PC-3 (cell line): ENCODE measurements at regions of chr2 and their contacts with region 1.

Region 1: GRCh38 chr2:69914170-69914960 is 544 bp upstream of the MXD1 start:
- DNase-seq: peak; percentile 99
- ATAC-seq: peak; percentile 82
- H3K4me3 ChIP-seq: peak overlapping the region; percentile 71
- H3K27ac ChIP-seq: peak overlapping the region; percentile 89
- H3K4me1 ChIP-seq: peaks cover 29% of the 10 kb centered on the region
- H3K27me3 ChIP-seq: no peaks in the 10 kb centered on the region
- CTCF ChIP-seq: peak; percentile 43

Region 2: GRCh38 chr2:69724540-69725159 is 189.7 kb before region 1 on chr2:
- CTCF ChIA-PET with region 1: interaction called, 7 read pairs
- POLR2A ChIA-PET with region 1: interaction called, 3 read pairs
- intact Hi-C with region 1: loop called (anchors 5 kb)
- DNase-seq: peak; percentile 94
- ATAC-seq: peak; percentile 84
- H3K4me3 ChIP-seq: peak overlapping the region; percentile 72
- H3K27ac ChIP-seq: no peak overlapping the region
- H3K4me1 ChIP-seq: no peaks in the 10 kb centered on the region
- H3K27me3 ChIP-seq: no peaks in the 10 kb centered on the region
- CTCF ChIP-seq: peak; percentile 93

Region 3: DNA sequence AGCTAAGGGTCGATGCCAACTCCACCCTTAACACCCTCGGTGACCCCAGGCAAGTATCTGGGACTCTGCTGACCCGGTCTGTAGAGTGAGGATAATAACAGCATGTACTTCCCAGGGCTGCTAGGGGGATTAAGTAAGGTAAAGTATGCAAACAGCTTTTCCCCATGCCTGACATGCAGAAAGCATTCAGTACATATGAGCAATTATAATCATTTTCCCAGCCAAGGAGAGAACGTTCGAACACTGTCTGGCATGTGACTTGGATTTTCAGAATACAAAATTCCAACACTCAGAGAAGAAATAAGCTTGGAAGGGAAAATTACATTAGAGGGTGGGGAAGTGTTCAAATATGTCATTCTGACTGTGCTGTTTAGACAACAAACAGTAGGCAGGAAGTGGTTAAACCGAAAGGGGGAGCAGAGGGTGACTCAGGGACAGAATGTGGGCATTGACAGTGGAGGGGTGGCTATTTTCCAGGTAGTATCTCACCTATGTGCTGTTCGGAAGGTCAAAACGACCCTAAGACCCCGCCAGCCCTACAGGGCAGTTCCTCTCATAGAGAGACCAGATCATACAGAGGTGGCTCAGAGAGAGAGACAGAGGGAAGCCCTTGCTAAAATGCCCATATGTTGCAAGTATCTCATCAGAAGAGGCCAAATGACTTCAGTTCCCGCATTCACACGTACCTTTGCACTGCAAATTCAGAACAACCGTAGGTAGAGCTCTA is 32.1 kb after region 1 on chr2:
- CTCF ChIA-PET with region 1: interaction called, 3 read pairs
- POLR2A ChIA-PET with region 1: interaction called, 3 read pairs
- intact Hi-C with region 1: loop called (anchors 1 kb)
- DNase-seq: peak; percentile 95
- ATAC-seq: peak; percentile 85
- H3K4me3 ChIP-seq: peak overlapping the region; percentile 41
- H3K27ac ChIP-seq: peak overlapping the region; percentile 98
- H3K4me1 ChIP-seq: peaks cover 53% of the 10 kb centered on the region
- H3K27me3 ChIP-seq: no peaks in the 10 kb centered on the region
- CTCF ChIP-seq: no peak

Region 4: GRCh38 chr2:70070541-70071268 is 156.3 kb after region 1 on chr2:
- CTCF ChIA-PET with region 1: interaction called, 9 read pairs
- POLR2A ChIA-PET with region 1: interaction called, 6 read pairs
- intact Hi-C with region 1: loop called (anchors 1 kb)
- DNase-seq: peak; percentile 83
- ATAC-seq: peak; percentile 99
- H3K4me3 ChIP-seq: no peak overlapping the region
- H3K27ac ChIP-seq: no peak overlapping the region
- H3K4me1 ChIP-seq: no peaks in the 10 kb centered on the region
- H3K27me3 ChIP-seq: no peaks in the 10 kb centered on the region
- CTCF ChIP-seq: peak; percentile 88

Region 5: DNA sequence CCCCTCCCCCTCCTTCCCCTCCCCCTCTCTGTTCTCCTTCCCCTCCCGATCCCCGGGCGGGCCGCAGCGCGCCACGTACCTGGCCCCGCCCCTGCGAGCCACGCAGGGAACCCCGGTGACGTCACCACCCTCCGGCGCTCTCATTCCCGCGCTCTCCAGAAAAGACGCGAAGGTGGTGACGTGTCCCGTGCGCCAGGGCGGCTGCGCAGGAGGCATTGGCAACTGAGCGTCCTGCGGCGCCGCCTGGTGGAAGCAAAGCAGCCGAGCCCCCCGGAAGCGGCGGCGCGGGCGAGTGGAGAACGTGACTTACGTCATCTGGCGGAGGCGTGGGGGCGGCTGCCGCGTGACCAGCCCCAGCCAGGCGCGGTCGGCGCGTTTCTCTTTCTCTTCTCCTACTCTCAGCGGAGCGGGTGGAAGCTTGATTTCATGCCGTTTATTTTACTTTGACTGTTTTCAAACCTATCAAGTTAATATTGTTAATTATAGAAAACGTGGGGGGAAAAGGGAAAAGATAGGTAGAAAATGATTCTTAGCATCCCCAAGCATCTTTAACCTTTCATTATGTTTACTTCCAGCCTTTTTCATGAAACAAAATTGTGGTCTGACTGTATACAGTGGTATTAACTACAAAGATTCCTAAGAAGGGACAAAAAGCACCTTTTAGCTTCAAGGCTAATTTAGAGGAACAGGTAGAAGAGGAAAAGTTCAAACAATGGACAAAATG is 228.4 kb after region 1 on chr2:
- CTCF ChIA-PET with region 1: interaction called, 5 read pairs
- POLR2A ChIA-PET with region 1: interaction called, 4 read pairs
- intact Hi-C with region 1: loop called (anchors 1 kb)
- DNase-seq: peak; percentile 100
- ATAC-seq: peak; percentile 60
- H3K4me3 ChIP-seq: peak overlapping the region; percentile 67
- H3K27ac ChIP-seq: peak overlapping the region; percentile 87
- H3K4me1 ChIP-seq: peaks cover 23% of the 10 kb centered on the region
- H3K27me3 ChIP-seq: no peaks in the 10 kb centered on the region
- CTCF ChIP-seq: peak; percentile 89